Activated B cell treated with CpG ODN at 0.5 μM for 24 hours (primary cell): ENCODE measurements at regions of chr1 and their contacts with region 1.

Region 1: DNA sequence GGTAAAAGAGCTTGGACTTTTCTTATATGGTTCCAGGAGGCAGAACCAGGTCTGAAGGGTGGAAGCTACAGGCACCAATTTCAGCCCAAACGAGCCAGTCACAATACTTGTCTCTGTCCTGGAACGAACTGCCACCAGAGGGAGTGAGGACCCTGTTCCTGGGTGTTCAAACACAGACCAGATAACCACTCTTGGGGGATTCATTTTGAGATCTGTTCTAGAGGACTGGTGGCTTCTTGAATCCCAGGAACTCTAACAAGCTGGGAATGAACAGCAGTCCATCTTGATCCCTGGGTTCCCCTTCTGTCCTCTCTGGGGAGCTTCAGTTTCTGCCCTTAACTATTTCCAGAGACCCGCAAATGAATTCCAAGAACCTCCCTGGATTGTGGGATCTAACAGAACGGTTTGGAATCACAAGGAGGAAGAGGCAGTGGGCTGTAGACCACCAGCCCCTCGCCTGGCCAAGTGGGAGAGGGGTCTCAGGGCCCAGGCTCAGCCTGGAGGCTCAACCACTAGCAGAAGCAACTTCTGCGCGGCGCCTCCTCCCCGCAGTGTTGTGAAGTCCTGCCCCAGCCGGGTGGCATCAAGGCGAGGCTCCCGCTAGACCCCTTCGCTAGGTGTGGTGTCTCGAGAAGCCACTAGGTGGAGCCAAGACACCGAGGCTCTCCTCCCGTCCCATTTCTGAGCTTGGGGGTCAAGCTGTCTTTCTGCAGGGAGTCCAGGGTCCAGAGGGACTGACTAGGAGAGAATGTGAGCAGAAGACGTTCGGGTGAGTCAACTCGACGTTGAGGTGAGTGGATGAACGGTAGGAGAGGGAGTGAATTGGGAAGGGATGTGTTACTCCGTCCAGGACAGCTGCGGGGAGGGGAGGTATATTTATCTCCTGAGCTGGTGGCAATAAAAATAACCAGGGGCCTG is 12.1 kb upstream of the NES start:
- DNase-seq: peak; percentile 55
- ATAC-seq: peak; percentile 98
- H3K4me3 Mint-ChIP-seq: no peak overlapping the region
- H3K27ac Mint-ChIP-seq: no peak overlapping the region
- H3K4me1 Mint-ChIP-seq: peaks cover 22% of the 10 kb centered on the region
- H3K27me3 Mint-ChIP-seq: peaks cover 51% of the 10 kb centered on the region
- CTCF ChIP-seq: peak; percentile 86

Region 2: GRCh38 chr1:156705918-156706656 is 16.8 kb after region 1 on chr1:
- CTCF ChIA-PET with region 1: interaction called, 36 read pairs
- POLR2A ChIA-PET with region 1: interaction called, 3 read pairs
- intact Hi-C with region 1: loop called (anchors 1 kb)
- DNase-seq: peak; percentile 62
- ATAC-seq: peak; percentile 60
- H3K4me3 Mint-ChIP-seq: peak overlapping the region; percentile 82
- H3K27ac Mint-ChIP-seq: no peak overlapping the region
- H3K4me1 Mint-ChIP-seq: peaks cover 28% of the 10 kb centered on the region
- H3K27me3 Mint-ChIP-seq: peaks cover 21% of the 10 kb centered on the region
- CTCF ChIP-seq: peak; percentile 29

Region 3: GRCh38 chr1:156721535-156721934 is 32.2 kb after region 1 on chr1:
- CTCF ChIA-PET with region 1: interaction called, 182 read pairs
- POLR2A ChIA-PET with region 1: interaction called, 9 read pairs
- intact Hi-C with region 1: loop called (anchors 1 kb)
- DNase-seq: no peak
- ATAC-seq: no peak
- H3K4me3 Mint-ChIP-seq: no peak overlapping the region
- H3K27ac Mint-ChIP-seq: no peak overlapping the region
- H3K4me1 Mint-ChIP-seq: peaks cover 10% of the 10 kb centered on the region
- H3K27me3 Mint-ChIP-seq: no peaks in the 10 kb centered on the region
- CTCF ChIP-seq: no peak

Region 4: GRCh38 chr1:156797212-156797871 is 108.0 kb after region 1 on chr1:
- CTCF ChIA-PET with region 1: interaction called, 3 read pairs
- POLR2A ChIA-PET with region 1: no interaction called
- intact Hi-C with region 1: loop called (anchors 2 kb)
- DNase-seq: no peak
- ATAC-seq: peak; percentile 73
- H3K4me3 Mint-ChIP-seq: no peak overlapping the region
- H3K27ac Mint-ChIP-seq: no peak overlapping the region
- H3K4me1 Mint-ChIP-seq: peaks cover 7% of the 10 kb centered on the region
- H3K27me3 Mint-ChIP-seq: no peaks in the 10 kb centered on the region
- CTCF ChIP-seq: peak; percentile 57

Region 5: DNA sequence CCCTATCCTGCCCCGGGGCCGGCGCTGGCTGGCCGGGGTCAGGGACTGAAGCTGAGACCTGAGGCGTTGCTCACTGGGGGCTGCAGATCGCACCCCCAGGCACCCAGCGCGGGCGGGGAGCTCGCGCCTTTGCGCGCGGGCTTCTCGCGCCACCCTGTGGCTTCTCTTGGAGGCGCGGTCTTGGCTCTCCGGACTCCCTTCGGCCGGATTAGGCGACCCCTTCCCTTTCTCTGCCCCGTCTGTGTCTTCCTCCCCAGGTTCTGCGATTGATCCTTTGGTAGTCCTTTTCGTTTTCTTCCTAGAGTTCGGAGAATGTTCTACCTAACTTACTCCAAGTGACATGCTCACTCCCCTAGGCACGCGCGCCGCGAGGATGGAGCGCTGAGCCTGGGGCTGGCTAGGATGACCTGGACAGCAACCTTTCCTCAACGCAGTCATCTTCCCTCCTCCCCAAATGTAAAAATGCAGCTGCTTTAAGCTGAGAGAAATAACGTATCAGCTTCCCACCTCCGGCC is 170.9 kb after region 1 on chr1:
- CTCF ChIA-PET with region 1: interaction called, 66 read pairs
- POLR2A ChIA-PET with region 1: interaction called, 4 read pairs
- intact Hi-C with region 1: loop called (anchors 1 kb)
- DNase-seq: peak; percentile 46
- ATAC-seq: peak; percentile 69
- H3K4me3 Mint-ChIP-seq: peak overlapping the region; percentile 65
- H3K27ac Mint-ChIP-seq: no peak overlapping the region
- H3K4me1 Mint-ChIP-seq: peaks cover 14% of the 10 kb centered on the region
- H3K27me3 Mint-ChIP-seq: peaks cover 50% of the 10 kb centered on the region
- CTCF ChIP-seq: no peak

Region 6: GRCh38 chr1:156927215-156928042 is 238.1 kb after region 1 on chr1:
- CTCF ChIA-PET with region 1: interaction called, 4 read pairs
- POLR2A ChIA-PET with region 1: no interaction called
- intact Hi-C with region 1: loop called (anchors 1 kb)
- DNase-seq: peak; percentile 26
- ATAC-seq: peak; percentile 60
- H3K4me3 Mint-ChIP-seq: no peak overlapping the region
- H3K27ac Mint-ChIP-seq: no peak overlapping the region
- H3K4me1 Mint-ChIP-seq: peaks cover 9% of the 10 kb centered on the region
- H3K27me3 Mint-ChIP-seq: peaks cover 67% of the 10 kb centered on the region
- CTCF ChIP-seq: no peak